Activated T-helper 1 cell treated with anti-CD3 and anti-CD28 coated beads, Interleukin-12 subunit alpha, Interleukin-12 subunit beta, Interleukin-2, Interleukin-4 antibody, amounts not matched to agents 30 ng/mL and 10 ng/mL and 1 ng/mL, durations not matched to agents 14 hours and 24 hours and 36 hours (primary cell): ENCODE measurements at regions of chr7 and their contacts with region 1.

Region 1: DNA sequence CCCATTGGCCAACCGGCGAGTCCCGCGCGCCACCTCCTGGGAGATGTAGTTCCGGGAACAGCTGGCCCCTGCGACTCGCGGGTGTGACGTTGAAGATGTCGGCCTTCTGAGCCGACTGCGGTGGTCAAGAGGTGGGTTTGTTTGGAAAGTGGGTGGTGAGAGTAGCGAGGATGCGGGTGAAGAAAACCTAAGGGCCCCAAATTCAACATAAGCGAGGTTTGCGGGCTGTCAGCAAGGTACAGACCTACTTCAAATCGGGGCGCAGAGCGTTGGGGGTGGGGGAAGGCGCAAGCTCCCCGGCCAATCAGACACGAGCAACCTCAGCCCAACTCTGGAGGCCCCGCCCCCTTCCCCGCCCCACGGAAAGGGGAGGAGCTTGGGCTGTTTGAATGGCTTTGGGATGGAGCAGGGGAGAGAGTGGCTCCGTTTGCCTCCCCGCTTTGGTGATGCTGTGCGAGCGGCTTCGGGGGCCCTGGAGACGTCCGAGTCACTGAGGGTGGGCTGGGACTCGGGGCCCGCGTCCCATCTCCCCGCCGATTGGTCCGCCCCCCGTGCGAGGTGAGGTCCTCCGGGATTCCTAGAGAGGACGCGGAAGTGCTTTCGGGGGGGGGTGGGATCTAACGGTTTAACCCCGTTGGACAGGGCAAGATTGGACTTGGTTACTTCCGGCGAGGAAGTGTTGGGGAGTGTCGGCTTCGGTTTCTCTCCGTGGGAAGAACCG is at the start of gene ZKSCAN5:
- DNase-seq: peak; percentile 96
- H3K4me3 Mint-ChIP-seq: peak within 1 kb of the TSS; percentile 90
- H3K27ac Mint-ChIP-seq: peak within 1 kb of the TSS; percentile 96
- H3K4me1 Mint-ChIP-seq: peaks cover 19% of the 10 kb centered on the region
- H3K27me3 Mint-ChIP-seq: no peaks in the 10 kb centered on the region
- total RNA-seq, gene ZKSCAN5: 8.0 and 8.1 TPM in 2 replicates

Region 2: GRCh38 chr7:99380032-99380822 is 124.5 kb before region 1 on chr7:
- intact Hi-C with region 1: loop called (anchors 2 kb)
- DNase-seq: peak; percentile 26
- H3K4me3 Mint-ChIP-seq: peak overlapping the region; percentile 86
- H3K27ac Mint-ChIP-seq: peak overlapping the region; percentile 91
- H3K4me1 Mint-ChIP-seq: peaks cover 34% of the 10 kb centered on the region
- H3K27me3 Mint-ChIP-seq: no peaks in the 10 kb centered on the region

Region 3: GRCh38 chr7:99438573-99439480 is 65.9 kb before region 1 on chr7 and contains the starts of genes CPSF4 and PTCD1:
- intact Hi-C with region 1: loop called (anchors 1 kb)
- DNase-seq: peak; percentile 91
- H3K4me3 Mint-ChIP-seq: peak within 1 kb of the TSS; percentile 98
- H3K27ac Mint-ChIP-seq: peak within 1 kb of the TSS; percentile 88
- H3K4me1 Mint-ChIP-seq: peaks cover 28% of the 10 kb centered on the region
- H3K27me3 Mint-ChIP-seq: no peaks in the 10 kb centered on the region
- total RNA-seq, gene CPSF4: 92.3 and 93.2 TPM in 2 replicates
- total RNA-seq, gene PTCD1: 13.7 and 16.0 TPM in 2 replicates

Region 4: DNA sequence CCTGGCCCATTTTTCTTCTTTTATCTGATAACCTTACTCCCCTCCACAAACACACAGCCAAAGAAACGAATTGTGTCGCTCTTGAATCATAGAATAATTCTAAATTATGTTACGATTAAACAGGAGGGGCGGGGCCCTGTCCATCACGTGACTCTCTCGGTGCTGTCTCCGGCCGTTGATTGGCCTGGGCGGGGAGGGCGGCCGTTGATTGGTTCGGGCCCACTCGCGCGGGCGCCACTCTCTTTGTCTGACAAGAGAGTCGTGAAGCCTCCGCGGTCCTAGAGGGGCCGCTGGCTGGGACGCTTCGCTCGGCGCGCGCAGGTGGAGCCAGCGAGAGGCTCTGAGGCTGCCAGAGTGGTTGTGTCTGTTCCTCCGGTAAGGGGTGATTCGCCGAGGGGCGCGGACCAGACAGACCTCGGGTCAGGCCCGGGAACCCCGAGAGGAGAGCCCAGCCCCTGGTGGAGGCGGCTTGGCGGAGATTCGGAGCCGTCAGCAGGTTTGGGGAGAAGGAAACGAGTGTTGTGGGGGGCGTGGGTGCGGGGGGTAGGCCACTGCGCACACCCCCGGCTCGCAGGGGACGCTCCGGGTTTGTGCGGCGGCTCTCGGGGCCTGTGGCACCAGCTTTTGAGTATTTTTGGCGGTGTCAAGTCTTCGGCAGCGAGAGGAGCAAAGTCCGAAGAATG is 32.1 kb before region 1 on chr7 and contains the start of gene ZNF789:
- intact Hi-C with region 1: loop called (anchors 1 kb)
- DNase-seq: peak; percentile 96
- H3K4me3 Mint-ChIP-seq: peak within 1 kb of the TSS; percentile 99
- H3K27ac Mint-ChIP-seq: peak within 1 kb of the TSS; percentile 92
- H3K4me1 Mint-ChIP-seq: peaks cover 30% of the 10 kb centered on the region
- H3K27me3 Mint-ChIP-seq: peaks cover 1% of the 10 kb centered on the region
- total RNA-seq, gene ZNF789: 19.6 and 22.4 TPM in 2 replicates

Region 5: GRCh38 chr7:99551767-99552463 is 47.2 kb after region 1 on chr7 and contains the start of gene FAM200A:
- intact Hi-C with region 1: loop called (anchors 1 kb)
- DNase-seq: peak; percentile 75
- H3K4me3 Mint-ChIP-seq: peak within 1 kb of the TSS; percentile 90
- H3K27ac Mint-ChIP-seq: peak within 1 kb of the TSS; percentile 31
- H3K4me1 Mint-ChIP-seq: peaks cover 31% of the 10 kb centered on the region
- H3K27me3 Mint-ChIP-seq: no peaks in the 10 kb centered on the region
- total RNA-seq, gene FAM200A: 4.7 and 5.2 TPM in 2 replicates

Region 6: GRCh38 chr7:99558306-99559174 is 53.8 kb after region 1 on chr7 and contains the start of gene ZNF655:
- intact Hi-C with region 1: loop called (anchors 1 kb)
- DNase-seq: peak; percentile 89
- H3K4me3 Mint-ChIP-seq: peak within 1 kb of the TSS; percentile 100
- H3K27ac Mint-ChIP-seq: peak within 1 kb of the TSS; percentile 98
- H3K4me1 Mint-ChIP-seq: peaks cover 48% of the 10 kb centered on the region
- H3K27me3 Mint-ChIP-seq: no peaks in the 10 kb centered on the region
- total RNA-seq, gene ZNF655: 77.9 and 79.9 TPM in 2 replicates

Region 7: DNA sequence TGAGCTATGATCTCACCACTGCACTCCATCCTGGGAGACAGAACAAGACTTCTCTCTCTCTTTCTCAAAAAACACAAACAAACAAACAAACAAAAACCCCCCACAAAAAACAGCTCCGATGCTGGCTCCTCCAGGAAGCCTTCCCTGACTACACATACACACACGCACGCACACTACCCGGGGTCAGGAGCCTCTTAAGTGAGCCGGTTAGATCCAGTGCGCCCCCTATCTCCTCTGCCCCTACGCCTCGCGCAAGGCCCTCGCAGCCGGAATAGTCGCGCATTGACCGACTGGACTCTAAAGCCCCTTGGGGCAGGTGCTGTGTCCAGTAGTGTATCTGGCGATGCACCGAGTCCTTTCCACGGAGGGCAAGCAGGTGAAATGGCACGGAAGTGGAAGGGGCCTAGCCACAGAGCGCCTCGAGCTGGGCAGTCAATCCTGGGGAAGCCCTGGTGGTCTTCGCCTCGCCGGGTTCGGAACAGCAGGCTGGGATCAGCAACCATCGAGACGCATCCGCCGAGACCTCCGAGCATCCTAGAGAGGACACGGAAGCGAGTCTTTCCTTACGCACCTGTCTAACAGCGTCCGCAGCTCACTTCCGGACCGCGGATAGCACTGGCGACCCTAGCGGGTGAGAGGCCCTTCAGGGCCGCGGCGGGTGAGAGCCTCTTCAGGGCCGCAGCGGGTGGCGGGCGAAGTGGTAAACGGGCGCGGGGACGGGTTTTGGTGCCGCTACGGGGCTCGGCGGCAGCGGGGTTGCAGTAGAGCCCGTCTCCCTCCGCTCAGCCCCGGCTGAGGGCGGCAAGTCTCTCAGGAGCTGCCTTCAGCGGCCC is 111.8 kb after region 1 on chr7 and contains the start of gene ZSCAN25:
- intact Hi-C with region 1: loop called (anchors 1 kb)
- DNase-seq: peak; percentile 79
- H3K4me3 Mint-ChIP-seq: peak within 1 kb of the TSS; percentile 96
- H3K27ac Mint-ChIP-seq: peak within 1 kb of the TSS; percentile 94
- H3K4me1 Mint-ChIP-seq: peaks cover 56% of the 10 kb centered on the region
- H3K27me3 Mint-ChIP-seq: peaks cover 4% of the 10 kb centered on the region
- total RNA-seq, gene ZSCAN25: 31.5 and 32.9 TPM in 2 replicates

Region 8: DNA sequence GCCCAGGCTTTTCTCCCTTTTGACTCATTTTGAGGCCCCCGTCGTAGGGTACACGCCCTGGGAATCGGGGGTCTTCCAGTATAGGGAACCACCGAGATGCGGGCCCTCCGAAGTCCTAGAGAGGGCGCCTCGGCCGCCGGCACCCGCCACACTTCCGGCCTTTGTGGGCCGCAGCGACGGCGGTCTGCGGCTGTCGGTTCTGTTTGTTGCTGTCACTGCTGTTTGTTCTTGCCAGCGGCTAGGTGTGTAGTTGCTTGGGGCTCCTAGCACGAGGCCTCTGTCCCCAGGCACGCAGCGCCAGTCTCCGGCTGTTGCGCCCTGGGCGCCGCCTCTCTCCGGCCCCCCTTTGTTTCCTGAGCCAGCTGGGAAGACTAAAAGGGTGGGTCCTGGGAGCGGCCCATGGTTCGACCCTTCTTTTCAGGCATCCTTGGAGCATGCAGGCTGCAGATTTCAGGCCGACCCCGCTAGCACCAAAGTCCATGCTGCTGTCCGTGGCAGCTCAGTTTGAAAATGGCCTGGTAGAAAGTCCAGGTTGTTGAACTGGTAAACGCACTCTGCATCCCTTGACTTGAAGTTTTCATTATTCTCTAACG is 492.9 kb after region 1 on chr7:
- intact Hi-C with region 1: no loop called
- DNase-seq: peak; percentile 69
- H3K4me3 Mint-ChIP-seq: peak overlapping the region; percentile 77
- H3K27ac Mint-ChIP-seq: peak overlapping the region; percentile 89
- H3K4me1 Mint-ChIP-seq: peaks cover 10% of the 10 kb centered on the region
- H3K27me3 Mint-ChIP-seq: peaks cover 5% of the 10 kb centered on the region